ENCODE measurements at regions of chr22 and their contacts with region 1.

Region 1: GRCh38 chr22:38681784-38682335 is at the start of gene TOMM22:
- DNase-seq: peak; percentile 89
- H3K4me3 Mint-ChIP-seq: peak within 1 kb of the TSS; percentile 93
- H3K27ac Mint-ChIP-seq: peak within 1 kb of the TSS; percentile 93
- H3K4me1 Mint-ChIP-seq: peaks cover 26% of the 10 kb centered on the region
- H3K27me3 Mint-ChIP-seq: peaks cover 6% of the 10 kb centered on the region

Region 2: DNA sequence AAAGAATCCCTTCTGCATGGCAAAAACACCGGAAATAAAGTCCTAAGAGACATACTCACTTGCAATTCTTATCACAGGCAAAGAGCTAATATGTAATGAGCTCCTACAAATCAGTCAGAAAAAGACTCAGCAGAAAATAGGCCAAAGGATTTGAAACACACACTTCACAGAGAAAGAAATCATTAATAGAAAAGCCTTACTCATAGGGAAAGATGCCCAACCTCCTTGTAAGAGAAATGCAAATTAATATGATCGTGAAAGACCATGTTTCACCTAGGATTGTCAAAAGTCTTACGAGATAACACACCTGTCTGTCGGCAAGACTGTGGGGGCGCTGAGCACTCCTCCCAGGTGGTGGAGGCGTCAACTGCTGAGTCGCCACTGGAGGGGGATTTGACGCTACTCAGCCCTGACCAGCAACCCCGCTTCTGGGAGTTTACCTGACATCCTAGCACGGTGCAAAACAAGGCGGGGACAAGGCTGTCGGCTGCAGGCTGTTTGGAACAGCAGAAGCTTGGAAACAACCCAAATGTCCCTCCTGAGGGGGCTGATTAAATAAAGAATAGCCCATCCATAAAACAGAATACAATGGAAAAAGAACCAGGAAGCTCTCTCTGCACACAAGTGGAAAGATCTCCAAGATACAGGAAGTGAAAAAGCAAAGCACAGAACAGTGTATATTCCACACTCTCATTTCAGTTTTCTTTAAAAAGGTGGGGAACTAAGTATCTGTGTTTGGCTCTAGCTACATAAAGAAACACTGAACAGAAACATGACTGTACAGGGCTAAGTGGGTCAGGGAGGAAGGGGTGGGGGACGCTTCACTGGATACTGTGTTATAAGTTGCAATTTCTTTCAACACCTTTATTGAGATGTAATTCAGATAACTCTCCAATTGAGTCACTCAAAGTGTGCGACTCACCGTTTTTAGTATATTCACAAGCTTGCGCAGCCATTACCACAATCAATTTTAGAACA is 376.1 kb before region 1 on chr22:
- CTCF ChIA-PET with region 1: no interaction called
- DNase-seq: peak; percentile 25
- H3K4me3 Mint-ChIP-seq: no peak overlapping the region
- H3K27ac Mint-ChIP-seq: peak overlapping the region; percentile 69
- H3K4me1 Mint-ChIP-seq: peaks cover 23% of the 10 kb centered on the region
- H3K27me3 Mint-ChIP-seq: no peaks in the 10 kb centered on the region

Region 3: GRCh38 chr22:38531251-38531938 is 150.5 kb before region 1 on chr22:
- CTCF ChIA-PET with region 1: no interaction called
- DNase-seq: no peak
- H3K4me3 Mint-ChIP-seq: peak overlapping the region; percentile 17
- H3K27ac Mint-ChIP-seq: peak overlapping the region; percentile 85
- H3K4me1 Mint-ChIP-seq: peaks cover 18% of the 10 kb centered on the region
- H3K27me3 Mint-ChIP-seq: no peaks in the 10 kb centered on the region

Region 4: DNA sequence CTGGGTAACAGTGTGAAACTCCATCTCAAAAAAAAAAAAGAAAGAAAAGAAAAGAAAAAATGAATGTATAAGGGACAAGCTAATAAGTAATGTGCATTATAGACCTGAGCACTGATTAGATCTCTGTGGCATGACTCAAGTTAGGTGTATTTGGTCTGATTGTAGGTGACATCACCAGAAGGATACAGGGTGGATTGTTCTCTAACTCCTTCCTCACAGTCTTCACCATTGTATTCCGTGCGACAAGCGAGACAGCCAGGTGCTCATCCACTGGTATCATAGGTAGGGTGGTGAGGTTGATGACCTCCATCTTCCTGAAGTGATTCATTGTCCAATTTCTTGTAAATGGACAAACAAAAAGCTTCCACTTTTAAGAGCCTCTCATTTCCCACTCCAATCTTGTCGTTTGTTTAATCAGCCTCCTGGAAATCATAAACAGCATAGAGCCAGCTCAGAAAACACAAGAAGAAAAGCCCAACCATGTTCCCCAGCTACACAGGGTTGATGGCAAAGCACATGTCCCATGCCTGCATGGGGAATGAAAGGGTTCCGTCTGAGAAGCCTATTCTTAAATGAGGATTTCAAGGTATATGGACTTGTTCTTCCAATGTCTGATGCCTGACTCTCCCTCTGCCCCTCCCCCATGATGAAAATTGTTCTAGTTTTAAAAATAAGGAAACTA is 31.9 kb before region 1 on chr22:
- CTCF ChIA-PET with region 1: no interaction called
- DNase-seq: no peak
- H3K4me3 Mint-ChIP-seq: no peak overlapping the region
- H3K27ac Mint-ChIP-seq: no peak overlapping the region
- H3K4me1 Mint-ChIP-seq: peaks cover 9% of the 10 kb centered on the region
- H3K27me3 Mint-ChIP-seq: peaks cover 9% of the 10 kb centered on the region

Region 5: DNA sequence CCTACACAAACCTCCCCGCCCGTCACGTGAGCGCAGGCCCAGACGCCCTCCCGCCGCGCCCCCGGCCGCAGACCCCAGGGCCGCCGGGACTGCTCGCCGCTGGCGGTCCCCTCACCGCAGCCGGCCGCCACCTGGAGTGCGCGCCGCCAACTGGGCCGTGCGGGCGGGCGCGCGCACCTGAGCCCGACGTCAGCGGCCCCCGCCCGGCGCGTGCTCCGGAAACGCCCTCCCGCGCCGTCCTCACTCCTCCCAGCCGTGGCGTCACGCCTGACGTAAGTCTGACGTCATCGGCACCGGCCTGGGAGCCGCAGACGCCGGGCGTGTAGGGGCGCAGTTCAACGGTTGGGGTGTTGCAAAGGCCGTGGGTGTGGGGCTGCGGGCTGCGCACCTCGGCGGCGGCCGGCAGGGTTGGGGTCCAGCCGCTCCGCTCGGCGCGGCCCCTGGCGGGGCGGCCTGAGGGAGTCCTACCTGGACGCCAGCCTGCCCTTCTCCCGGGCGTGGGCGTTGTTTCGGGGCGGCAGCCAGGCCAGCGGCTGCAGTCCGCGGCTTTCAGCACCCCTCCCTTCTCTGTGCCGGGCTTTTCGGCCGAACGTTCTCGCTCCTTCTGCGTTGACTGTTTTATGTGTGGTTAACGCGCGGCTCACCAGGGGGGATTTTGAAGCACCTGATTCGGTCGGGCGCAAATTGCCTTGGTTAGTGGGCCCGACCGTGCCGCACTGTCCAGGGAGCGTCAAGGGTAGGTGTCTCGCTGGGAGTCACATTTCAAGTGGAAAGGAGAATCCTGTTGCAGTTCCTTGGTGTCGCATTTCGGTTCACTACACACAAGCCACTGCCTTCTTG is 19.1 kb after region 1 on chr22 and contains the start of gene JOSD1:
- CTCF ChIA-PET with region 1: interaction called, 30 read pairs
- DNase-seq: peak; percentile 97
- H3K4me3 Mint-ChIP-seq: peak within 1 kb of the TSS; percentile 81
- H3K27ac Mint-ChIP-seq: peak within 1 kb of the TSS; percentile 99
- H3K4me1 Mint-ChIP-seq: peaks cover 64% of the 10 kb centered on the region
- H3K27me3 Mint-ChIP-seq: peaks cover 9% of the 10 kb centered on the region

Region 6: GRCh38 chr22:38882972-38883622 is 201.2 kb after region 1 on chr22:
- CTCF ChIA-PET with region 1: no interaction called
- DNase-seq: no peak
- H3K4me3 Mint-ChIP-seq: no peak overlapping the region
- H3K27ac Mint-ChIP-seq: peak overlapping the region; percentile 79
- H3K4me1 Mint-ChIP-seq: peaks cover 17% of the 10 kb centered on the region
- H3K27me3 Mint-ChIP-seq: peaks cover 32% of the 10 kb centered on the region

Measured in activated naive CD4-positive, alpha-beta T cell treated with anti-CD3 and anti-CD28 coated beads, Interleukin-2, amount 10 ng/mL, durations not matched to agents 7 days and 5 days (primary cell).